Activated CD4-positive, alpha-beta T cell treated with anti-CD3 and anti-CD28 coated beads for 36 hours (primary cell): ENCODE measurements at regions of chr21 and their contacts with region 1.

Region 1: GRCh38 chr21:15976807-15977206 is 247.0 kb downstream of the USP25 start:
- DNase-seq: no peak
- ATAC-seq: no peak
- H3K4me3 Mint-ChIP-seq: no peak overlapping the region
- H3K27ac Mint-ChIP-seq: no peak overlapping the region
- H3K4me1 Mint-ChIP-seq: no peaks in the 10 kb centered on the region
- H3K27me3 Mint-ChIP-seq: no peaks in the 10 kb centered on the region

Region 2: GRCh38 chr21:15682186-15682895 is 294.5 kb before region 1 on chr21:
- CTCF ChIA-PET with region 1: no interaction called
- POLR2A ChIA-PET with region 1: no interaction called
- intact Hi-C with region 1: no loop called
- DNase-seq: no peak
- ATAC-seq: no peak
- H3K4me3 Mint-ChIP-seq: no peak overlapping the region
- H3K27ac Mint-ChIP-seq: no peak overlapping the region
- H3K4me1 Mint-ChIP-seq: peaks cover 12% of the 10 kb centered on the region
- H3K27me3 Mint-ChIP-seq: peaks cover 4% of the 10 kb centered on the region

Region 3: GRCh38 chr21:15868940-15869339 is 107.9 kb before region 1 on chr21:
- CTCF ChIA-PET with region 1: no interaction called
- POLR2A ChIA-PET with region 1: interaction called, 11 read pairs
- intact Hi-C with region 1: no loop called
- DNase-seq: no peak
- ATAC-seq: no peak
- H3K4me3 Mint-ChIP-seq: no peak overlapping the region
- H3K27ac Mint-ChIP-seq: no peak overlapping the region
- H3K4me1 Mint-ChIP-seq: no peaks in the 10 kb centered on the region
- H3K27me3 Mint-ChIP-seq: no peaks in the 10 kb centered on the region